Activated T-helper 2 cell treated with anti-CD3 and anti-CD28 coated beads, Interferon-gamma antibody, Interleukin-2, Interleukin-4, amounts not matched to agents 10 μg/mL and 5 μg/mL and 100 μg/mL, durations not matched to agents 14 hours and 24 hours and 36 hours (primary cell): ENCODE measurements at regions of chr1 and their contacts with region 1.

Region 1: GRCh38 chr1:212782422-212783154 is 9.0 kb downstream of the NSL1 start:
- DNase-seq: no peak
- H3K4me3 Mint-ChIP-seq: no peak overlapping the region
- H3K27ac Mint-ChIP-seq: peak overlapping the region; percentile 33
- H3K4me1 Mint-ChIP-seq: peaks cover 18% of the 10 kb centered on the region
- H3K27me3 Mint-ChIP-seq: no peaks in the 10 kb centered on the region

Region 2: DNA sequence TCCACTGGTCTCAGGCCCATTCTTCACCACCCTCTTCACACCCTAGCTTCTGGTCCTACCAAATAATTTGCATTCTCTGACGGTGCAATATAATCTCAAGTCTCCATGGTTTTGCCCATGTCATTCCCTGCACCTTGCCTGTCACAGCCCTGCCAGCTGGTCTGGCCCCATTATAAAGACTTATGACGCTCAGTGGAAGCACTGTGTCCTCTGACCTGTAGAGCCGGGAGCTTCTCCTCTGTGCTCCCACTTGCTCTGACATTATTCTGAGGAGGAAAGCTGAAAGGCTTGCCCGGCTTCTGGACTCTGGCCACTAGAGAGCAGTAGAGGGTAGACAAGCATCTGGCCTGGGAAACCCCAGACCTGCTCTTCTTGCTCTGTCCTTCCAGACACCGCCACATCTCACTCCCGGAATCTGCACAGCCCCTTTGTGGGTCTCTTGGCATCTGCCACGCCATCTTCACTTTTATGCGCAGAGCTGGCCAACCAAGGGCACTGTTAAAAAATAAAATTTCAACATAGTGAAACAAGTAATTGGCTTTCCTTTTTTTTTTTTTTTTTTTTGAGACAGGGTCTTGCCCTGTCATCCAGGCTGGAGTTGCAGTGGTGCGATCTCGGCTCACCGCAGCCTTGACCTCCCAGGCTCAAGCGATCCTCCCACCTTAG is 305.4 kb before region 1 on chr1:
- intact Hi-C with region 1: loop called (anchors 2 kb)
- DNase-seq: peak; percentile 65
- H3K4me3 Mint-ChIP-seq: no peak overlapping the region
- H3K27ac Mint-ChIP-seq: peak overlapping the region; percentile 16
- H3K4me1 Mint-ChIP-seq: peaks cover 12% of the 10 kb centered on the region
- H3K27me3 Mint-ChIP-seq: peaks cover 17% of the 10 kb centered on the region

Region 3: DNA sequence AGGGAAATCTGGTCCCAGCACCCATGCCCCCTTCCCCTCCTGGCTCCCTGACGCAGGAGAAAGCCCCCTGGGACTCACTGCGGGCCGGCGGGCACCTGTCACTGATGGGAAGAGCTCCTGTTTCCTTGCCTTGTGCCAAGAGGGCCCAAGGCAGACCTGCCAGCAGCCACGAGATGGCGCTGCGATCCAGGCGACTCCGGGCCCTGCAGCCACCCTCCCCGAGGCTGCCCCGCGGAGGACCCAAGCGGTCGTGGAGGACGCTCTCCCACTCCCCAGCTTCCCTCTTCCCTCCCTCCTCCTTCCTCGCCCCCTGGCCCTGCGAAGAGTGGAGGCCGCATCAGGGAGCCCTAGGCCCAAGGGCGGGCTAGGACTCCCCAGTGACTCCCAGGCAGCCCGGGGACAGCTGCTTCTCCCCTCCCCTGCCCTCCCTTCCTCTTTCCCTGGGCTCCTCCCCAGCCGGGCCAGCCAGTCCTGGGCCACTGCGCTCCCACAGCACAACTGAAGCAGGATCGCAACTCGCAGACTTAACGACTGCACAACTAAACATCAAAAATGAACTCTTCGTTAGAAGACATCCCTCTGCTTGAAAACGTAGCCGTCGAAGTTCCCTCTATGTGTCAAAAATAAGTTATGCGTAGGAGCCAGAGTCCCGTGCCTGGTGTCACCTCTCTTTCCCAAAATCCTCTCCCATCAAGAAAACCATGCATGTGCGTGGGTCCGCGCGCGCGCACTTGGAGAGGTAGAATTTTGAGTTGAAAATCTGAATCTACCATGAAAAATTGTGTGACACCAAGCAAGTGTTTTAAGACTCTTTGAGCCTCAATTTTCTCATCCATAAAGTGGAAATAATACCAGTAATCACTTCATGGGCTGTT is 117.1 kb before region 1 on chr1:
- intact Hi-C with region 1: loop called (anchors 1 kb)
- DNase-seq: peak; percentile 73
- H3K4me3 Mint-ChIP-seq: peak overlapping the region; percentile 82
- H3K27ac Mint-ChIP-seq: peak overlapping the region; percentile 73
- H3K4me1 Mint-ChIP-seq: peaks cover 42% of the 10 kb centered on the region
- H3K27me3 Mint-ChIP-seq: peaks cover 16% of the 10 kb centered on the region